ENCODE measurements at regions of chrX and their contacts with region 1.

Region 1: GRCh38 chrX:65601530-65602220 is 65.8 kb upstream of the MSN start:
- DNase-seq: peak in 13 of 14 experiments; percentile 17 to 88 (median 42)
- ATAC-seq: peak; percentile 68
- H3K4me3 ChIP-seq: no peak overlapping the region
- H3K4me3 Mint-ChIP-seq: peak overlapping the region; percentile 71
- H3K27ac ChIP-seq: peak overlapping the region; percentile 64 to 81
- H3K27ac Mint-ChIP-seq: peak overlapping the region; percentile 95
- H3K4me1 ChIP-seq: peaks cover 65% of the 10 kb centered on the region
- H3K4me1 Mint-ChIP-seq: peaks cover 81% of the 10 kb centered on the region
- H3K27me3 ChIP-seq: no peaks in the 10 kb centered on the region
- H3K27me3 Mint-ChIP-seq: no peaks in the 10 kb centered on the region
- CTCF ChIP-seq: no peak

Region 2: DNA sequence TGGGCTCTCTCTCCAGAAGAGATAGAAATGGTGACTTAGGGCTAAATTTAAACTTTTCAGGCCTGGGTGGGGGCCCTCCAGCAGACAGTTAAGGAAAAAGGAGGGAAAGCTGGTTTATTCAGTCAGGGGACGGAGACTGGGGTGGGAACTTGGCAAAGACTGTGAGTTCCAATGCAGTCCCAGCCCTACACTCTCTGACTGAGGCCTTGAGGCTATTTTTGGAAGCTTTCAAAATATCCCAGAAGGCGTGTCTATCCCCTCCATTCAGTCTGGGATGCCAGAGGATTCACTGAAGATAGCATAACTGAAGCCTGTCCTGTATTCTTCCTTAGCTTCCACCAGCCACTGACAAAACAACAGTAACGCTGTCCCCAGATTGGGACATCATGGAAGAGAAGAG is 33.7 kb after region 1 on chrX:
- CTCF ChIA-PET with region 1: no interaction called
- POLR2A ChIA-PET with region 1: no interaction called
- intact Hi-C with region 1: loop called in 1 of 2 experiments (anchors 5 kb)
- DNase-seq: no peak
- ATAC-seq: no peak
- H3K4me3 ChIP-seq: no peak overlapping the region
- H3K4me3 Mint-ChIP-seq: no peak overlapping the region
- H3K27ac ChIP-seq: no peak overlapping the region
- H3K27ac Mint-ChIP-seq: no peak overlapping the region
- H3K4me1 ChIP-seq: no peaks in the 10 kb centered on the region
- H3K4me1 Mint-ChIP-seq: no peaks in the 10 kb centered on the region
- H3K27me3 ChIP-seq: no peaks in the 10 kb centered on the region
- H3K27me3 Mint-ChIP-seq: no peaks in the 10 kb centered on the region
- CTCF ChIP-seq: no peak

Region 3: GRCh38 chrX:65658229-65658628 is 56.6 kb after region 1 on chrX:
- CTCF ChIA-PET with region 1: no interaction called
- POLR2A ChIA-PET with region 1: interaction called, 12 read pairs
- intact Hi-C with region 1: no loop called
- DNase-seq: no peak
- ATAC-seq: no peak
- H3K4me3 ChIP-seq: no peak overlapping the region
- H3K4me3 Mint-ChIP-seq: no peak overlapping the region
- H3K27ac ChIP-seq: no peak overlapping the region
- H3K27ac Mint-ChIP-seq: peak overlapping the region; percentile 65
- H3K4me1 ChIP-seq: peaks cover 17% of the 10 kb centered on the region
- H3K4me1 Mint-ChIP-seq: peaks cover 43% of the 10 kb centered on the region
- H3K27me3 ChIP-seq: no peaks in the 10 kb centered on the region
- H3K27me3 Mint-ChIP-seq: no peaks in the 10 kb centered on the region
- CTCF ChIP-seq: no peak

Region 4: DNA sequence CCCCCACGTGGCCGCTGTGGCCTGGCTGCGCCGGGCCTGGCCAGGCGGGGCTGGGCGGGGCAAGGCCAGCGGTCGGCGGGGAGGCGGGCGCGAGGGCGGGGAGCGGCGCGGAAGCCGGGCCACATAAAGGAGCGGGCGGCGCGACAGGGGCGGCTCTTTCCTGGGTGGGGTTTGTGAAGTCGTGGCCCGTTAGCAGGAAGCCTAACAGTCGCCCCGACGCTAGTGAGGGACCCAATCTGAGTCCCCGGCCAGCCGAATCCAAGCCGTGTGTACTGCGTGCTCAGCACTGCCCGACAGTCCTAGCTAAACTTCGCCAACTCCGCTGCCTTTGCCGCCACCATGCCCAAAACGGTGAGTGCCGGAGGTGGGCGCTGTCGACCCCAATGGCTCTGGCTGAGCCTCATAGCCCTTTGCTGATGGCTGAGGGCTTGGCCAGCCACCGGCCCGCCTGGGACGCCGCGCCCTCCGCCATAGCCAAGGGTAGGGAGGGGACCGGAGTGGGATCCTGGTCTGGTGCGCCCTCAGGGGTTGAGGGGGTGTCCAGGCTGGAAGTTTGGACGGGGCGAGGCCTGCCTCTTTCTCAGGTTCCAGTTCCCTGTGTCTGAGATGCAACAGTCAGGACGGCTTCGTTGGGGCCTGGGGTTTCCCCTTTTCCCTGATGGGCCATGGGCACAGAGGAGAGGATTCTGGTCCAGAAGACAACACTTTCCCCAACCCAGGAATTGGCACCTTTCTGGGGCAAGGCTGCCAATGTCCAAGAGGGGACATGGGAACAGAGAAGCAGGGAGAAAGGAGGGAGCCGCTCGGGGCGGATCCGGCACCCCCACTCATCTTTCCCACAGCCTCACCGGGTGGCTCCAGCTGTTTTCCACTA is 66.1 kb after region 1 on chrX and contains the start of gene MSN:
- CTCF ChIA-PET with region 1: no interaction called
- POLR2A ChIA-PET with region 1: interaction called, 22 read pairs
- intact Hi-C with region 1: no loop called
- DNase-seq: peak; percentile 49 to 86 (median 66)
- ATAC-seq: peak; percentile 74
- H3K4me3 ChIP-seq: peak within 1 kb of the TSS; percentile 73
- H3K4me3 Mint-ChIP-seq: peak within 1 kb of the TSS; percentile 99
- H3K27ac ChIP-seq: peak within 1 kb of the TSS; percentile 72 to 84
- H3K27ac Mint-ChIP-seq: peak within 1 kb of the TSS; percentile 93
- H3K4me1 ChIP-seq: peaks cover 24% of the 10 kb centered on the region
- H3K4me1 Mint-ChIP-seq: peaks cover 48% of the 10 kb centered on the region
- H3K27me3 ChIP-seq: no peaks in the 10 kb centered on the region
- H3K27me3 Mint-ChIP-seq: no peaks in the 10 kb centered on the region
- CTCF ChIP-seq: no peak
- total RNA-seq, gene MSN: 268 to 273 TPM

Region 5: DNA sequence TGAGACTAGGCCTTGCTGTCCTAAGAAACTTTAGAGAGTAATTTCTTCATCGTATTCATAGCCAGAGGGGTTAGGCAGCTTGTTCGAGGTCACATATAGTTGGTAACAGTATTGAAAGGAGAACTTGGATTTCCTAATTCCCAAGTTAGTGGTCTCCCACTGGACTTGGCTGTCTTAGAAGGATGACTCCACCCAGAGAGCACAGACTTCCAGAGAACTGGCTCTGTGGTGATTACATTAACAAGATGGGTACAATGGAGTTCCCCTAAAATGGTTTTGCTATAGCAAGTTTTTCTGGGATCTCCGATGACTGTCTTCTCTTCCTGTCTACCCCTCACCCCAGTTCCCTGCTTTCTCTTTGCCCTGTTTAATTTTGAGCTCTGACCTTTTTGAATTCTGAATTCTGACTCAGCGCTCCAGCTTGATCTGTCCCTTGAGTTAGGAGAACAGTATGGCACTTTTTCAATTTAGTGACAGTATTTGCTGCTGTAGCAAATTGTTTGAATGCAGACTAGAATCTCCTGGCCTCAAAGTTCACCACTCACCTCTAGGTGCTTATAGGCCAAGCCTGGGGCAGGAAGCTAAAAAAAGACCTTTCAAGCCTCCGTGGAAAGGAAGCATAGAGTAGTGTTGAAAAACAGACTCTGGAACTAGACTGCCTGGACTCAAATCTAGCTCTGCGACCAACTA is 72.7 kb after region 1 on chrX:
- CTCF ChIA-PET with region 1: interaction called, 7 read pairs
- POLR2A ChIA-PET with region 1: interaction called, 22 read pairs
- intact Hi-C with region 1: no loop called
- DNase-seq: peak in 5 of 14 experiments; percentile 8 to 64 (median 53)
- ATAC-seq: peak; percentile 68
- H3K4me3 ChIP-seq: peak overlapping the region; percentile 44
- H3K4me3 Mint-ChIP-seq: peak overlapping the region; percentile 87
- H3K27ac ChIP-seq: peak overlapping the region; percentile 50 to 65
- H3K27ac Mint-ChIP-seq: peak overlapping the region; percentile 93
- H3K4me1 ChIP-seq: peaks cover 72% of the 10 kb centered on the region
- H3K4me1 Mint-ChIP-seq: peaks cover 92% of the 10 kb centered on the region
- H3K27me3 ChIP-seq: no peaks in the 10 kb centered on the region
- H3K27me3 Mint-ChIP-seq: no peaks in the 10 kb centered on the region
- CTCF ChIP-seq: no peak

Region 6: DNA sequence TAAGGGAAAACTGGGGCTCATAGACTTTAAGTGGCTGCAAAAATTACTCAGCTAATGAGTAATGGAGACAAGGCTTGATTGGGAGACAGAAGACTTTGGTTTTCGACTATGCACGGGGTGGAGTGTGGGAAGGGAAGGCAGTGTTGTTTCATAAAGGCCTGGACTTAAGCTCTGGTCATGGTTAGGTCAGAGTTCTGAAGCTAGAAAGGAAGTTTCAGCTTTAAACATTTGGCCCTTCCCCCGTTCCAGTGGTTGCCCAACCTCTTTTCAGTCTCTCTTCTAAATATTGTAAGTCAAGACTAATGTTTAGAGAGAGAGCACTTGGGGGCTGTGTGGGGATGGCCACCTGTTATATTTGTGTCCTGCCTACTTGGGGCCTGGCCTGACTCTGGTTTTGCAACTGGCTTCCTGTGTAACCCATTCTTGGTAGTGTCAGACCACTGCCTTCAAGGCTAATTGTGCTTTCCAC is 86.8 kb after region 1 on chrX:
- CTCF ChIA-PET with region 1: no interaction called
- POLR2A ChIA-PET with region 1: interaction called, 12 read pairs
- intact Hi-C with region 1: no loop called
- DNase-seq: no peak
- ATAC-seq: no peak
- H3K4me3 ChIP-seq: no peak overlapping the region
- H3K4me3 Mint-ChIP-seq: peak overlapping the region; percentile 21
- H3K27ac ChIP-seq: peak overlapping the region; percentile 18 to 39
- H3K27ac Mint-ChIP-seq: peak overlapping the region; percentile 94
- H3K4me1 ChIP-seq: peaks cover 91% of the 10 kb centered on the region
- H3K4me1 Mint-ChIP-seq: peaks cover 88% of the 10 kb centered on the region
- H3K27me3 ChIP-seq: no peaks in the 10 kb centered on the region
- H3K27me3 Mint-ChIP-seq: no peaks in the 10 kb centered on the region
- CTCF ChIP-seq: no peak

Region 7: DNA sequence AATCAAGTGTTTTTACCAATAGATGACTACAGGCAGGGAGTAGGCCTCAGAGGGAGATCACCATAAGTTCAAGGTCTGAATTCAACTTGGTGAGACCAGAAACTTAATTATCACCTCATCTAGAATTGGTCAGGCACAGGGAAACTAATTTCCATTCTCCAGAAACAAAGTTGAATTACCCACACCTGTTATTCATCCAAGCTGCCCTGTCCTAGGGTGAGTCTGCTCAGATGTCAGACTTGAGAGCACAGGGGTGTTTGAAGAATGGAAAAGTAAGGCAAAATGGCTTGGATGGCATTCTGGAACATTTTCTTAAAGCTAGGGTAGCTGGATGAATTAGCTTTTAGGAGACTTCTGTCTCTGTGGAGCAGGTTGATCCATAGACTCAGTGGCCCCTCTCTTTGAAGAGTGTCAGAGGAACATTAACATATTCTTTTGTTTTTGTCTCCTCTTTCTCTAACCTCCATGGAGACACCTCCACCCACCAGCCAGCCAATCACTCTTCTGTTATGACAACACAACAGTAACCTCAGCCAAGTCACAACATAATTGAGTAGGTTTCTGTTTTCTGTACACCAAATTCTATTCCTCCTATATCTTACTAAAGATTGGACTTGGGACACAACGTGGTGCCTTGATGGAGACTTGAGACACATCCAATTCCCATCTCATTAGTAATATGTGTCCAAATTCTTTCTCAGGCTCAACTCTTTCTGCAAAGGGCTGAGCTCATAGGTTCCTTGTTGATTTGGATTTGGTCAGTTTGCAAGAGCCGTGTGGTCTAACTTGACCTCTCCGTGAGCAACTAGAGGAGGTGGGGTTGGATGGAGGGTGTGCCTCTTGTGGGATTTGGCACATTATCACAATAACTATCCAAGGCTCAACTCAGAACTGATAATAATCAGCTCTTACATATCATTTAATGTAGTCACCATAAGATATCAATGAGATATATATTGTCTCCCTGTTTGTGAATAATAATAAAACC is 393.1 kb after region 1 on chrX:
- CTCF ChIA-PET with region 1: no interaction called
- POLR2A ChIA-PET with region 1: no interaction called
- intact Hi-C with region 1: no loop called
- DNase-seq: no peak
- ATAC-seq: no peak
- H3K4me3 ChIP-seq: no peak overlapping the region
- H3K4me3 Mint-ChIP-seq: no peak overlapping the region
- H3K27ac ChIP-seq: no peak overlapping the region
- H3K27ac Mint-ChIP-seq: no peak overlapping the region
- H3K4me1 ChIP-seq: peaks cover 7% of the 10 kb centered on the region
- H3K4me1 Mint-ChIP-seq: peaks cover 31% of the 10 kb centered on the region
- H3K27me3 ChIP-seq: no peaks in the 10 kb centered on the region
- H3K27me3 Mint-ChIP-seq: no peaks in the 10 kb centered on the region
- CTCF ChIP-seq: no peak